ENCODE measurements at regions of chr3 and their contacts with region 1.

Region 1: DNA sequence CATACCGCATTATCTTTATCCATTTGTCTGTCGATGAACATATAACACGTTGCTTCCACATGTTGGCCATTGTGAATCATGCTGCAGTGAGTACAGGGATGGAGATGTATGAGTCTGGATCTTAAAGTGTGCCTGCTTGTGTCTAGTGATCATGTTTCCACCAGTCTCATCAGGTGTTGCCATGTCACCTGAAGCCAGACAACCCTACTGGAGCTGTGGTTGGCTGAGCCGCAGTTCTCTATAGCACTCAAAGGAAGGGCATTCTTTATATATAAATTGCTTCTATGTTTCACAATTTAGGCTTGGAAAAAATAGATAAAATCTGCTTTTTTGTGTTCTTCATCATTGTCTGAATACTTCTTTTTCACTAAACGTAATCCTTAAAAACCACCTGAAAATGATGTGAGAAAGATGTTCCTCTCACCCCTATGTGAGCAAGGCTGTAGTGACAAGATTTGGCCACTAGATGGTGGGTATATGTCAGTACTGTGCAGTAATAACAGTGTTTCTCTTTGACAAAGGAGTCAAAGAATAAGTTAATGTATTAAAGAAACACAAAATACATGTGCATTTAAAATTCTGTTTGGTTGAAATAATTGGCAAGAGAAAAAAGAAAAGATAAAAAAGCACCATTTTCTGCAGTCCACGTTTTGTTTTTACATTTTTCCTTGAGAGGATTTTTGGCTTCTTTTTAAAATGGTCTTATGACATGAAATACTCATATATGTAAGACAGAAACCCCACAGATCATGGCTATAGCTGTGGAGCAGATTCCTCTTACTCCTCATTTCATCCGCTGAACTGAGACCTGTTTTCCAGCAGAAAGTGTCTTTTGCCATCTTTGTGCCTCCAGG is 394.5 kb upstream of the DPPA4 start:
- DNase-seq: peak; percentile 84
- ATAC-seq: peak; percentile 85
- H3K4me3 ChIP-seq: no peak overlapping the region
- H3K27ac ChIP-seq: no peak overlapping the region
- H3K4me1 ChIP-seq: no peaks in the 10 kb centered on the region
- H3K27me3 ChIP-seq: no peaks in the 10 kb centered on the region
- CTCF ChIP-seq: peak; percentile 93

Region 2: DNA sequence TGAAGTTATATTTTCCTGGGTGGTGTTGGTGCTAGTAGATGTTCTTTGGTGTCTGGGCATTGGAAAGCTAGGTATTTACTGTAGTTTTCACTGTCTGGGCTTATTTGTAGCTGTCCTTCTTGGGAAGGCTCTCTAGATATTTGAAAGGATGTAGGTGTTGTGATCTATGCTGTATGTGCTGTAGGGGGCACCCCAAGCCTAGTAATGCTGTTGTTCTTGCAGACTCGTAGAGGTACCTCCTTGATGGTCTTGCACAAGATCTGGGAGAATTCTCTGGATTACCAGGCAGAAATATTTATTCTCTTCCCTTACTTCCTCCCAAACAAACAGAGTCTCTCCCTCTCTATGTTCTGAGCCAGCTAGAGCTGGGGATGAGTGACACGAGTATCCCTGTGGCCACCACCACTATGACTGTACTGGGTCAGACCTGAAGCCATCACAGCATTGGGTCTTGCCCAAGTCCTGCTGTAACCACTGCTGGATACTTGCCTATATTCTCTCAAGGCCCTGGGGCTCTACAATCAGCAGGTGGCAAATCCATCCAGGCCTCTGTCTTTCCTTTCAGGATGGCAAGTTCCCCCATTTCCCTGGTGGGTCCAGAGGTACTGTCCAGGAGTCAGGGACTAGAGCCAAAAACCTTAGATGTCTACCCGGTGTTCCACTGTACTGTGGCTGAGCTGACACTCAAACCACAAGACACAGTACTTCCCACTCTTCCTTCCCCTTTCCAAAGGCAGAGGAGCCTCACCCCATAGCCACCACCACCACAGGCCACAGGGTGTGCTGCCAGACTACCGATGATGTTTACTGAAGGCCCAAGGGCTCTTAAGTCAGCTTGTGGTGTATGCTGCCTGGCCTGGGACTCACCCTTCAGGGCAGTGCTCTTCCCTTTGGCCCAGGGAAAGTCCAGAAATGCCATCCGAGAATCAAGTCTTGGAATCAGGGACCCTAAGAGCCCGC is 199.3 kb before region 1 on chr3:
- CTCF ChIA-PET with region 1: no interaction called
- POLR2A ChIA-PET with region 1: no interaction called
- intact Hi-C with region 1: loop called (anchors 2 kb)
- DNase-seq: peak; percentile 78
- ATAC-seq: peak; percentile 97
- H3K4me3 ChIP-seq: no peak overlapping the region
- H3K27ac ChIP-seq: no peak overlapping the region
- H3K4me1 ChIP-seq: peaks cover 4% of the 10 kb centered on the region; the same call in 1 of the 2 replicates
- H3K27me3 ChIP-seq: no peaks in the 10 kb centered on the region
- CTCF ChIP-seq: peak; percentile 80

Region 3: GRCh38 chr3:109853077-109853731 is 121.4 kb after region 1 on chr3:
- CTCF ChIA-PET with region 1: no interaction called
- POLR2A ChIA-PET with region 1: no interaction called
- intact Hi-C with region 1: no loop called
- DNase-seq: no peak
- ATAC-seq: no peak
- H3K4me3 ChIP-seq: no peak overlapping the region
- H3K27ac ChIP-seq: no peak overlapping the region
- H3K4me1 ChIP-seq: no peaks in the 10 kb centered on the region
- H3K27me3 ChIP-seq: no peaks in the 10 kb centered on the region
- CTCF ChIP-seq: no peak

Region 4: DNA sequence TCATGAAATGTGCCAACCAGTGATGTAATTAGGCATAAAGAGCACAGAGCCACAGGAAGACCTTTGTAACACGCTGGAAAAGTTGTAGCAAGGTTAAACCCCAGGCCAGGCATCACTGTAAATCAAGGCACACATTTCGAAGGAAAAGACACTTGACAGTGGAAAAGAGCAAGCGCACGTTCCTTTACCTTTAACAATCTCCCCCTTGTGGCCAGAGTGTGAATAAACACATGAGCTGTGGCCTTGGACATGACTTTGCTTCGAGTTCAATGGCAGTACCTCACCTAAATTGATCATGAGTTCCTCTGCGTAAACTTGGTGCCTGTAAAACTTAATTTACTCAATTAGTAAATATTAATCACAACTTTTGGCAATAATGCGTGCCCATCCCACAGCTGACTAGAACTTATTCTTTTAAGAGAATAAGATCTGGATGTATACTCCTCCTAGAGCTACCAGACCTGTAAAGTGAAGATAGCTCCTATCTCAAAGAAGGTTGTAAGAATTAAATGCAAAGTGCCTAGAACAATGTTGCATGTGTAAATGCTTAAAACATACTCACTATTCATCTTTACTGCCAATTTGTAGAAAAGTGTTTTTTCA is 582.8 kb after region 1 on chr3:
- CTCF ChIA-PET with region 1: no interaction called
- POLR2A ChIA-PET with region 1: no interaction called
- intact Hi-C with region 1: loop called (anchors 10 kb)
- DNase-seq: peak; percentile 88
- ATAC-seq: peak; percentile 80
- H3K4me3 ChIP-seq: no peak overlapping the region
- H3K27ac ChIP-seq: no peak overlapping the region
- H3K4me1 ChIP-seq: peaks cover 10% of the 10 kb centered on the region
- H3K27me3 ChIP-seq: no peaks in the 10 kb centered on the region
- CTCF ChIP-seq: peak; percentile 90

Region 5: DNA sequence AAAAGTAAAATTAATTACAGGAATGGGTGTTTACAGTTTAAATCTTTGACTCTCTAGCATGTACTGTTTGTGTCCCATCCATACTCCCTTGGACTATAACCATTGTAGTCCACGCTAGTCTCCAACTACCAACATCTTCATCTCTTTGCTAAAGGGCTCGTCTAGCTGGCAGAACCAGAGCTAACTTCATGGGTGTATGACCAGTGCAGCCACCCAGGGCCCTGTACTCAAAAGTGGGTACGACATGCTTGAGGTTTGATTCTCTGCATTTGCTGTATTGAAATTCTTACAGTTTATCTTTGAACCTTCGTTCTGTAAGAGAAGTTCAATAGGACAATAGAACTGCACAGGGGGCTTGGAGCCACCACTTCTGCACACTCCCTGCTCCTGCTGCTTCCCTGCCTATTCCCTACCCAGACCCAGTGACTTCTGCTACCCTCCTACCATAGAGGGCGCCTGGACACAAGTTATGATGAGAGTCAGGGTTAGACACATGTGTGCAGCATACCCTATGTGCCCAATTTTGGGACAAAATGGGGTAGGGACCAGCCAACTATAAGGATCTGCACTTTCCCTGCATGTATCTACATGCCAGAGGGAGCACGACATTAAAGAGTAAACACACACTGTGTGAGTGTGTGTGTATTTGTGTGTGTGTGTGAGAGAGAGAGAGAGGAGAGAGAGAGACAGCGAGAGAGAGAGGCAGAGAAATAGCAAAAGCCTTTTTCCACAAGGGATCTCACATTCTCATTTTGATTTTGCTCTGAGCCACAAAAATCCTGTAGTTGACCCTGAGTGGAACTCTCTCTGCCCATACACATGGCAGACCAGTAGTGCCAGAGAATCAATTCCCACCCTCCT is 1280.8 kb after region 1 on chr3:
- CTCF ChIA-PET with region 1: no interaction called
- POLR2A ChIA-PET with region 1: no interaction called
- intact Hi-C with region 1: loop called (anchors 5 kb)
- DNase-seq: peak; percentile 60
- ATAC-seq: peak; percentile 98
- H3K4me3 ChIP-seq: no peak overlapping the region
- H3K27ac ChIP-seq: no peak overlapping the region
- H3K4me1 ChIP-seq: no peaks in the 10 kb centered on the region
- H3K27me3 ChIP-seq: no peaks in the 10 kb centered on the region
- CTCF ChIP-seq: peak; percentile 66

Region 6: DNA sequence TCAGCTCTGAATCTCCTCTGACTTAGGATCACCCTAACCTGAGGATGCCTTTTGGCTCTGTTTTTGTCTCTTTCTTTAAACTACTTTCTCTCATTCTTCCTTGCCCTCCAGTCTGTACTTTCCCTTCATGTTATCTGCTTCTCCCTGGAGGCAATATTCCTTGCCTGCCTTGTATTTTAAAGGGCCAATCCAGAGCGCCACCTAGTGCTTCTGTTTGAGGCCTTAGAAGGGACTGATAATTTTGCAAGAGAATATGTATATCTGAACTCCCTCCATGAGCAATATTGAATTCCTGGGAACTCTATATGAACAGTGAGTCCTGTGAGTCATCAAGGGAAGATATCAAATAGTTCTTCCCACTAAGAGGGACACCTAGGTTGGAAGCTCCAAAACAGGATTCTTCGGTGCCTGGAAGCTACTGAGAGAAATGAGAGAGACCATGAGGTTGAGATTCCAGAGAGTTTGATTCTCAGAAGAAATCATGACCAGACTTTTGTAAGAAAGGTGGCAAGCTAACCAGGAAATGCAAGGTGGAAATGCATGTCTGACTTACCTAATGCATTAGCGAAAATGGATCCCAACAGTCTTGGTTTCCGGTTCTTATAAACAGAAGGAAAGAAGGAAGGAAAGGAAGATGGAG is 1606.3 kb after region 1 on chr3:
- CTCF ChIA-PET with region 1: no interaction called
- POLR2A ChIA-PET with region 1: no interaction called
- intact Hi-C with region 1: loop called (anchors 5 kb)
- DNase-seq: peak; percentile 92
- ATAC-seq: peak; percentile 89
- H3K4me3 ChIP-seq: no peak overlapping the region
- H3K27ac ChIP-seq: no peak overlapping the region
- H3K4me1 ChIP-seq: peaks cover 19% of the 10 kb centered on the region
- H3K27me3 ChIP-seq: no peaks in the 10 kb centered on the region
- CTCF ChIP-seq: peak; percentile 98

Measured in PC-3 (cell line).